Dorsolateral prefrontal cortex (tissue), 120 donors: ENCODE measurements at regions of chr3 and their contacts with region 1.

Region 1: DNA sequence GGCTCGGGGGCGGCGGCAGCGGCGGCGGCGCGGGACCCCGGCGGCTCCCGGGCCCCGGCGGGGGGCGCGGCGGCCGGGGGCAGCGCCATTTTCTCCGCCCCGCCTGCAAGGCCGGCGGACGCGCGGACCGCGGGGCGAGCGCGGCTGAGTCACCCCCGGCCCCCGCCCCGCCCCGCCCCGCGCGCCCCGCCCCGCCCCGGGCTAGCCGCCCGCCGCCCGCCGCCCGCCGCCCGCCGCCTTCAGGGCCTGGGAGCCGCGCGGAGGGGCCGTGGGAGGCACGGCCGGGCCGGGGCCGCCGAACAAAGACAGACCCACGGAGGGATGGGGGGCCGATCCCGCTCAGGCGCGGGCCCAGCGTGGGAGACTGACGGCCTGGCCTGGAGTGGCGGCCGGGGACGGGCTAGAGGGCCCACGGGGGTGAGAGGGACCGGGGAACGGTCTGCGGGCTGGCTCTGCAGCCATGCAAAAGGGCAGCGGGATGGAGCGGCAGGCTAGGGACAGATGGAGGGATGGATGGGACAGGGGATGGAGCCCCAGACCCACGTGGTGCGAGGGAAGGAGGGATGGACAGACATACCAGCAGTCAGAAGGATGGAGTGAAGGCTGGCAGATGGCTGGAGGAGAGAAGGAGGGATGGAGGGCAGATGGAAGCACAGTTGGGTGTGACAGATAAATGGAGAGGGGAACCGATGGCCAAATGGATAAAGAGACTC is at the start of gene EIF4E3:
- DNase-seq: peak in 5 of 10 donors; percentile 24 to 63 (median 37)
- H3K4me3 ChIP-seq: peak within 1 kb of the TSS; percentile 61 to 88 (median 78)
- H3K27ac ChIP-seq: peak within 1 kb of the TSS in 53 of 59 donors; percentile 45 to 90 (median 76)
- H3K27me3 ChIP-seq: no peaks in the 10 kb centered on the region
- CTCF ChIP-seq: no peak
- total RNA-seq, gene EIF4E3: 42.7 to 110 (median 79.2) TPM

Region 2: GRCh38 chr3:71859123-71859519 is 133.7 kb after region 1 on chr3:
- intact Hi-C with region 1: loop called (anchors 2 to 5 kb)
- DNase-seq: no peak
- H3K4me3 ChIP-seq: no peak overlapping the region
- H3K27ac ChIP-seq: no peak overlapping the region
- H3K27me3 ChIP-seq: peaks cover 0 to 4% (median 0%) of the 10 kb centered on the region in 45 donors
- CTCF ChIP-seq: peak in 53 of 56 donors; percentile 18 to 79 (median 52)

Region 3: DNA sequence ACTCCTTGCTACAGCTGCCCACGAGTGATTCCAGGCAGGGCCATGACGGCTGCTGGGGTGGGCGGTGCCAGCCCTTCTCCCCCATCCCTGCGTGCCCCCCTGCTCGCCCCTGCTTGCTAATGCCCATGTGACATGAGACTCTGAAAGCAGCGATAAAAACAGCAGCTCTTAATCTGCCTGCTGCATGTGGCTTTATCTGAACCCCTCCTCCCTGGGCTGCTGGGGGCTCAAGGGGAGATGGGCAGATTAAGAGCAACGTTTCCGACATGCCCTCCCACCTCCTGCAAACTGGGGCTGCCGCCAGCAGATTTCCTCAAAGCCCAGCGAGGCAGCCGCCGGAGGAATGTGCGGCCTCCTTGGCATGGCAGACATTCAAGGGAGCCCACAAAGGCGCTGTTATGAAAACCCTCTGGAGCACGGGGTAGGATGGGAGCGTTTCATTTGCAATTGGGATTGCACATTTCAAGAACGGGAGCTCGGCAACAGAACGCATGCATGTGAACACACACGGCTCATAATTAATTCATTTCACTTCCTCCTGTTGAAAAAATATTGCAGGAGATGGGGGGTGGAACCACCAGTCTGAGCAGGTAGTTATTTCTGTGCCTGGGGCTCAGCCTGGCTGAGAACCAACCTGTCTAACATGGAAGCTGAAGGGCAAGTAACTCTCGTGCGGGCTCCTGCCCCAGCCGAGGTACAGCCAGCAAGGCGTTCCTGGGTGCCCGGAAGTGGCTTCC is 563.7 kb after region 1 on chr3:
- intact Hi-C with region 1: loop called in 1 of 2 experiments (anchors 10 kb)
- DNase-seq: peak; percentile 16 to 82 (median 76)
- H3K4me3 ChIP-seq: peak overlapping the region in 58 of 59 donors; percentile 7 to 62 (median 42)
- H3K27ac ChIP-seq: peak overlapping the region in 58 of 59 donors; percentile 18 to 94 (median 82)
- H3K27me3 ChIP-seq: peaks cover 0 to 3% (median 0%) of the 10 kb centered on the region in 45 donors
- CTCF ChIP-seq: peak in 1 of 56 donors; percentile 29

Region 4: GRCh38 chr3:72829701-72830100 is 1104.3 kb after region 1 on chr3:
- intact Hi-C with region 1: loop called in 1 of 2 experiments (anchors 5 kb)
- DNase-seq: no peak
- H3K4me3 ChIP-seq: no peak overlapping the region
- H3K27ac ChIP-seq: no peak overlapping the region
- H3K27me3 ChIP-seq: no peaks in the 10 kb centered on the region
- CTCF ChIP-seq: no peak